Activated T-helper 2 cell treated with anti-CD3 and anti-CD28 coated beads, Interferon-gamma antibody, Interleukin-2, Interleukin-4, amounts not matched to agents 10 μg/mL and 5 μg/mL and 100 μg/mL, durations not matched to agents 14 hours and 24 hours and 36 hours (primary cell): ENCODE measurements at regions of chr3 and their contacts with region 1.

Region 1: DNA sequence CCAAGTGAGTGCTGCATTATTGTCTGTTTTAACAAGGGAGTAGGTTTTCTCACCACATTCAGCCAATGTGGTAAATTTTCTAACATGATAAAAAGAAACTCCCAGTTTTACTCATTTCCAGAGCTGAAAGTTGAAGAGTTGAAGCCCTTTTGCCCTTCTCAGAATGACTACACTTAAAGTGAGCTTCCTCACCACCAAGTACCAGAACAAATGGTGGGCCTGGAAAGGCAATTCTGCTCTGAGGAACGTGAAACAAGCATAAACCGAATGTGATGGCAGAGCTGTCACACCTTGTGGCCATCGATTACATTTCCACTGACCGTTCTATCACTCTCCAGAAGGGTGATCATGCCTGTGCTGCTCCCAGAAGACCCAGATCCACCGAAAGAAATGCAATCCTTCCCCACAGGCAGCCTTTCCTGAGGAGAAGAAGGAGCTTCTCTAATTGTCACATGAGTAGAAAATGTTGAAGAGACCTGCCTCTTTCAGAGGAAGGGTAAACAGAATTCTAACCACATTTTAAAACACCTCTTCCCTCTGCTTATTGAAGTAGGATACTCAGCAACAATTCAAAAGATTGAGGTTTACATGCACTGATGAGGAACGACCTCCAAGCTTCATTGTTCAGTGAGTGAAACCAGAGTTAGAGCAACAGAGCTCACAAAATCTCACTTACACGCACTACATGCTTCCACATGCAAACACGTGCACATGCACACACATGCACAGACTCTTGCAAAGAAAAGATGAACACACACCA is 21.4 kb upstream of the CCR9 start:
- DNase-seq: peak; percentile 38
- H3K4me3 Mint-ChIP-seq: no peak overlapping the region
- H3K27ac Mint-ChIP-seq: peak overlapping the region; percentile 13
- H3K4me1 Mint-ChIP-seq: peaks cover 56% of the 10 kb centered on the region
- H3K27me3 Mint-ChIP-seq: peaks cover 65% of the 10 kb centered on the region

Region 2: GRCh38 chr3:45841757-45842491 is 23.0 kb before region 1 on chr3 and contains the start of gene LZTFL1:
- intact Hi-C with region 1: loop called (anchors 2 kb)
- DNase-seq: peak; percentile 83
- H3K4me3 Mint-ChIP-seq: peak within 1 kb of the TSS; percentile 88
- H3K27ac Mint-ChIP-seq: no peak within 1 kb of the TSS
- H3K4me1 Mint-ChIP-seq: peaks cover 20% of the 10 kb centered on the region
- H3K27me3 Mint-ChIP-seq: peaks cover 73% of the 10 kb centered on the region
- total RNA-seq, gene LZTFL1: 3.2 and 4.6 TPM in 2 replicates

Region 3: GRCh38 chr3:45881078-45882022 is 16.4 kb after region 1 on chr3:
- intact Hi-C with region 1: loop called (anchors 1 kb)
- DNase-seq: no peak
- H3K4me3 Mint-ChIP-seq: no peak overlapping the region
- H3K27ac Mint-ChIP-seq: peak overlapping the region; percentile 22
- H3K4me1 Mint-ChIP-seq: peaks cover 17% of the 10 kb centered on the region
- H3K27me3 Mint-ChIP-seq: peaks cover 61% of the 10 kb centered on the region

Region 4: GRCh38 chr3:45892161-45892560 is 27.2 kb after region 1 on chr3:
- intact Hi-C with region 1: no loop called
- DNase-seq: no peak
- H3K4me3 Mint-ChIP-seq: no peak overlapping the region
- H3K27ac Mint-ChIP-seq: no peak overlapping the region
- H3K4me1 Mint-ChIP-seq: peaks cover 9% of the 10 kb centered on the region
- H3K27me3 Mint-ChIP-seq: peaks cover 66% of the 10 kb centered on the region

Region 5: DNA sequence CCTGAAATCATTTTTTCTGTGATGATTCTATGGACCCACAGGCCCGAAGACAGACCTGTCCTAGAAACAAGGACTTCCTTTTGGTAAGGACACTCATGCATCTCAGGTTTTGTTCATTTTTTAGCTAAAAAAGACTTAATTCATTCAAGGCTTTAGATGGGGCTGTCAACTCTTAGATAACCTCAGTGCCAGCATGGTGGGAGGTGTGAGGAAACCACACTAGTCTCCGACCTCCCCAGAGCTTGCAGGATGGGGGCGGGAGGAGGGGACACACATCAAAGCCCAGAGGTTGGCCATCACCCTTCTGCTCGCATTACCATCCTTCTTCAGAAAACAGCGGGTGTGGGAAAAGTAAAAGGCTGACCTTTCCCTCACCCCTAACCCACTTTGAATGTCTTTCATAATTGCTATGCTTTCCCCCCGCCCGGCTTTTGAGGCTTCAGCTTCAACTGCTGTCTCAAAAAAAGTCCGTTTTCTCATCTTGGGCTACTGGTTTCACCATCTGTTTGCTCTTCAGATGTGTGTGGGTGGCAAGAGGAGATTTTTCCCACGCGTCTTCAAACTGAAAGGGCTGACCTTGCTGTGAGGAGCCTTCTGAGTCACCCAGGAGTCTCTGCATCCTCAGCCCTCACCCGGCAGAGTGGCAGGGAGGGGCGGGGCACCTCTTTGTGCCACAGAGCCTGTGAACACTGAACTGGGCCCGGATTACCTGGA is 50.7 kb after region 1 on chr3:
- intact Hi-C with region 1: loop called (anchors 1 kb)
- DNase-seq: peak; percentile 68
- H3K4me3 Mint-ChIP-seq: peak overlapping the region; percentile 23
- H3K27ac Mint-ChIP-seq: peak overlapping the region; percentile 51
- H3K4me1 Mint-ChIP-seq: peaks cover 25% of the 10 kb centered on the region
- H3K27me3 Mint-ChIP-seq: peaks cover 38% of the 10 kb centered on the region

Region 6: DNA sequence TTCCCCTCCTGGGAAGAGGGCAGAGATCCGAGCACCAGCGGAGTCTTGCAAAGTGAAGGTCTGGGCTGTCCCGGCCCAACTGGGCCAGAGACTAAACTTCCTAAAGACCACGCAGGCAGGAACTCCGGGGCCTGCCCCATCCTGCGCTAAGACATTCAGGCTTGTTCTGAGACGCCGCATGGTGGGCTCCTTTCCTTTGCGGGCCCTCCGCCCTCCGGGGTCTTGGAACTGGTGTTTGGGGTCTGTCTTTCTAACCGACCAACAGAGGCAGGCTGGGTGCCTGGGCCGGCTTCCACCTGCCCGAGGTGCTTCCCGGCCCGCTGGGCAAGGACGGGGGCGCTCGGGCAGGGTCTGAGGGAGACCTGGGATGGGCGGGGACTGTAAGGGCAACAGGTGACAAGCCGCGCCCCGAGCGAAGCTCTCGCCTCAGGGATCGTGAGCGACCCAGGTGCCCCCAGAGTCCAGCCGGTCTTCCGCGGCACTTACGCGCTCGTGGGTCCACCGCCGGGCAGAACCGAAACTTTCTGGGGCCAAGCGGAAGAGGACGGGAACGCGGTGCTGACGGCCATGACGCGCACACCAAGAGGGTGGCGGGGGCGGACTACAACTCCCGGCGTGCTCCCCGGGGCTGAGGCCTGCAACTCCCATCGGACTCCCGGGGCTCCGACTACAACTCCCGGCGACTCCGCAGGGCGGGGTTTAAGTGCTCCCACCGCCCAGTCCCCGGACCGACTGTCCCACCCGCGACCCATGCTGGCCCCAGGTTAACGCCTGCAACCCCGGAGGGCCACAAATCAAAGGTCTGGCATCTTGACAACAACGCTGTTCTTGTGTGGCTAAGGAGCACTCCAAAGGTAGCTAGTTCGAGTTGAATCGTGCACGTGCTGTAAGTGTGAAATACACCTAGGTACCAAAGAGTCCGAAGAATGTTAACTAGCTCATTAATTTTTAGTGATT is 130.6 kb after region 1 on chr3 and contains the start of gene FYCO1:
- intact Hi-C with region 1: loop called (anchors 10 kb)
- DNase-seq: peak; percentile 80
- H3K4me3 Mint-ChIP-seq: peak within 1 kb of the TSS; percentile 85
- H3K27ac Mint-ChIP-seq: peak within 1 kb of the TSS; percentile 95
- H3K4me1 Mint-ChIP-seq: peaks cover 44% of the 10 kb centered on the region
- H3K27me3 Mint-ChIP-seq: peaks cover 13% of the 10 kb centered on the region
- total RNA-seq, gene FYCO1: 19.6 and 20.2 TPM in 2 replicates

Region 7: GRCh38 chr3:46070595-46071093 is 205.7 kb after region 1 on chr3:
- intact Hi-C with region 1: loop called (anchors 2 kb)
- DNase-seq: no peak
- H3K4me3 Mint-ChIP-seq: peak overlapping the region; percentile 3
- H3K27ac Mint-ChIP-seq: peak overlapping the region; percentile 70
- H3K4me1 Mint-ChIP-seq: peaks cover 60% of the 10 kb centered on the region
- H3K27me3 Mint-ChIP-seq: peaks cover 26% of the 10 kb centered on the region

Region 8: DNA sequence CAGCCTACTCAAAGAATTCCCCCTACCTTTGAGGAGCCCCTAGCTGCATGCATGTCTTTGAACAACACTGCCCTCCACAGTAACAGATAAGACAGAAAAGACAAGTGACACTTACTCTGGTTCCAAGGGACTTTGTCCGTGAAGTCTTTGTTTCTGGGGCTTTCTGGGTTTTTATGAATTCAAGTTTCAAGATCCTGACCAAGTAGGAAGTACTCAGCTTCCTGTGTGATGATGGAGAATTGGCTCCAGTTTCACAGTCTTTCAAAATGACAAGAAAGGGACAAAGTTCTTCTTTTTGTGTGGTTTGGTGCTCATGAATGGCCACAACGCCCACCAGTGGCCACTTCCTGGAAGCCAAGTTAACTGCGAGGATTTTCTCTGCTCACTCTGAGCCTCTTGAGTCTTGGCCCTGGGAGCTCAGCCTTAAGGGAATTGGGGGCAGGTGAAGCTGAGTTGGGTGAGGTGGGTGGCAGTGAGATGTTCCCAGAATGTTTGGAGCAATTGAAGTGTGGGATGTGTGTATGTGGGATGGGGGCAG is 343.3 kb after region 1 on chr3 and contains the start of gene CCR1:
- intact Hi-C with region 1: loop called (anchors 5 kb)
- DNase-seq: peak; percentile 44
- H3K4me3 Mint-ChIP-seq: no peak within 1 kb of the TSS
- H3K27ac Mint-ChIP-seq: peak within 1 kb of the TSS; percentile 18
- H3K4me1 Mint-ChIP-seq: peaks cover 25% of the 10 kb centered on the region
- H3K27me3 Mint-ChIP-seq: peaks cover 31% of the 10 kb centered on the region
- total RNA-seq, gene CCR1: 0.41 and 0.51 TPM in 2 replicates